ENCODE measurements at regions of chr5 and their contacts with region 1.

Region 1: GRCh38 chr5:14108170-14108996 is 34.8 kb upstream of the TRIO start:
- DNase-seq: no peak
- H3K4me3 Mint-ChIP-seq: peak overlapping the region; percentile 61
- H3K27ac Mint-ChIP-seq: peak overlapping the region; percentile 40
- H3K4me1 Mint-ChIP-seq: peaks cover 26% of the 10 kb centered on the region
- H3K27me3 Mint-ChIP-seq: peaks cover 12% of the 10 kb centered on the region

Region 2: DNA sequence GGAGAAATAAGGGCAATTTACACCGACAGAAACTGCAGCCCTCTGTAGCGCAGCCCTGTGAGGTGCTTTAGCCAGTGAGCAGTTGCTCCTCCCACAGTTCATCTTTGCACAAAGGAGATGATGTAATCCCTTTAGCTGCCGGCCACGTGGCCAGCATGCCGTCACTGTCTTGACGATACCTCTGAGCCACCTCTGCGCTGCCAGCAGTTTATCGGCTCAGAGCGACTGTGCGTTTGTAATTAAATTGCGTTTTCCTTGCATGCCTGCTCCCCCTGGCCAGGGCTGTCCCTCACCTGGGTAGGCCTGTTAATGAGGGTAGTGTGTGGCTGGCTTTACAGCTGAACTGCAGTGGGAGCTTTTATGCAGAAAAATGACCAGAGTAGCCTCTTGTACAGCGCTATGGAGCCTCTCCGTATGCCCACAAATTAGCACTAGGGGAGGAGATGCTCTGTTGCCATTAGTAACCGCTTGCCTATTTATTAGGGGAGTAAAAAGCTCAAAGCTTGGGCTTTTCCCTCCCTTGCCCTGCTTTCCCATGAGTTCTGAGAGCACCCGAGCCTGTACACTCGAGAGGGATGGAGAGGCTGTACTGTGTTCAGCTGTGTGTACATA is 141.8 kb after region 1 on chr5:
- intact Hi-C with region 1: no loop called
- DNase-seq: no peak
- H3K4me3 Mint-ChIP-seq: no peak overlapping the region
- H3K27ac Mint-ChIP-seq: no peak overlapping the region
- H3K4me1 Mint-ChIP-seq: no peaks in the 10 kb centered on the region
- H3K27me3 Mint-ChIP-seq: no peaks in the 10 kb centered on the region

Region 3: DNA sequence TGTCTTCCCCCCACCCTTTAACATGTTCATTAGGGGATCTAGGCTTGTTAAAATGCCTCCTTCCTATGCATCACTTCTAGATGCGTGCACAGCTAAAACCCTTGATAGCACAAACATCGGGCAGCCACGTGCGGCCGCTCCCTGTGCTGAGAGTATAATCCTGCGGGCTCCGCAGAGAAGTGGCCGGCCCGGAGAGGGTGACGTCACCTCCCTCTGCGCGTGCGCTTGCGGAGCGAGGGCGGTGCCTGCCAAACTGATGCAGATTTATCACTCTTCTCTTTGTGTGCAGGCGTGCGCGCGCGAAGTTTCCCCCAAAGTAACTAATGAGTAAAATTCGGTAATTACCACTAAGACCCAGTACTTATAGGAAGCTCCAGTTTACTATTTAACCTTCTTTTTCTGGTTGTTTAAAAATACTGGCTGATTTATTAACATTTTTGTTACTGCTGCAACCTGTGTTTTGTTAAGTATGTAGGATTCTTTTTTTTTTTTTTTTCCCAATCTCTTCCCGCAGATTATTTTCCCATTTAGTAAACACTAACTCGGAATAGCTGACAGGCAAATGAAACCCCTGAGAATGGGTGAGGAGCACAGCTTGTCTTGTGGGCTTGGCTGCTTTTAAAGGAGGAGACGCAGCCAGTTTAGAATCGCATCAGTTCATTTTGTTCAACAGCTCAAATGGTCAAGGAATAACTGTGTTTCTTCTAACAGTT is 156.4 kb after region 1 on chr5:
- intact Hi-C with region 1: loop called (anchors 2 kb)
- DNase-seq: peak; percentile 70
- H3K4me3 Mint-ChIP-seq: peak overlapping the region; percentile 66
- H3K27ac Mint-ChIP-seq: no peak overlapping the region
- H3K4me1 Mint-ChIP-seq: peaks cover 19% of the 10 kb centered on the region
- H3K27me3 Mint-ChIP-seq: peaks cover 13% of the 10 kb centered on the region

Region 4: GRCh38 chr5:14270209-14270702 is 161.9 kb after region 1 on chr5:
- intact Hi-C with region 1: loop called (anchors 1 kb)
- DNase-seq: no peak
- H3K4me3 Mint-ChIP-seq: no peak overlapping the region
- H3K27ac Mint-ChIP-seq: no peak overlapping the region
- H3K4me1 Mint-ChIP-seq: peaks cover 5% of the 10 kb centered on the region
- H3K27me3 Mint-ChIP-seq: peaks cover 3% of the 10 kb centered on the region